AG04449 (cell line): ENCODE measurements at regions of chr6 and their contacts with region 1.

Region 1: GRCh38 chr6:33248925-33249731 is 22.5 kb downstream of the VPS52 start:
- DNase-seq: peak; percentile 95
- H3K4me3 ChIP-seq: peak overlapping the region; percentile 81
- CTCF ChIP-seq: peak; percentile 29

Region 2: DNA sequence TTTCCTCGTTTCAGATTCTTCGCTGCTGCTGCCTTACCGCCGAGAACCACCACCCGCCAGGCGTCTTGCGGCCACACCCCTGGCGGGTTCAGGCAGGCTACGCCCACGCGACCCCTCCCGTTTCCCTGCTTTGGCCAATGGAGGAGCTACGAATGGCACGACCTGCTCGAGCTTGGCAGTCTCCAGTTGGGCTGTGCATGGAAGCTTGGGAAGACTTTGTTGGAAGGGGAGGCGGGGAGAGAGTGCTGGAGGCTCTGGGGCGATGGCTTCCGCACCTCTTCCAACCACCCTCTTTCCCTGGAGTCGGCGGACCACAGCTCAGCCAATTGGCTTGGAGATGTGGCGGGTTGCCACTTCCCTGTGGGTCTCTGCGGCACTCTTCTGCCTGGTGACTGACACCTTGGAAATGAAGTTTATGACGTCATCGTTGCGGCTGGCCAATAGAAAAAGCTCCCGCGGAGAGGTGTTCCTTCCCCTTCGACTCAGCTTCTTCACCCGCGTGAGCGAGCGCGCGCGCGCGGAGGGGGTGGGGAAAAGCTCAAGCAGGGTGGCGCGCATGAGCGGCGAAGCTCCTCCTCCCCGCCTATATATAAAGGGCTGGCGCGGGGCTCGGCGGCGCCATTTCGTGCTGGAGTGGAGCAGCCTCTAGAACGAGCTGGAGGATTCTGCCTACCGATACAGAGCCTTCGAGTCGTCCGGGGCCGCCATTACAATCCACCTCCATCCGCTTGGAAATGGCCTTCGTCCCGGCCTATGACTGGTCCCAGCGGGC is 277.4 kb before region 1 on chr6:
- CTCF ChIA-PET with region 1: interaction called, 6 read pairs
- POLR2A ChIA-PET with region 1: interaction called, 70 read pairs
- DNase-seq: peak; percentile 99
- H3K4me3 ChIP-seq: peak overlapping the region; percentile 92
- CTCF ChIP-seq: no peak

Region 3: DNA sequence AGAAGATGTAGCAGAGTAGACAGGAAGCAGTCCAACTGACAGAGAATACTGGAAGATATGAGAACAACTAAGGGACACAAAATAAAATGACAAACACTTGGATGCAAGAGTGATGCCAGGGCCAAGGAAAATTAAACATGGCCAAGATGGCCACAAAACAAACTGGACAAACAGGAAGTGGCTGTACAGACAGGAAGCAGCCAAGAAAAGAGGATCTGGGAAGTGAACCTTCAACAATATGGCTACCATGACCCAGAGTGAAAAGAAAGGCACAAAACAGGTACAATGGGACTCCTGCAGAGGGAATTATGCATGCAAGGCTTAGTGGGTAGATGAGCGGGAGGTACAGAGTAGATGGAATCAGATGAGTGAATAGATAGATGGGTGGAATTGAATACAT is 144.2 kb before region 1 on chr6:
- CTCF ChIA-PET with region 1: no interaction called
- POLR2A ChIA-PET with region 1: no interaction called
- DNase-seq: no peak
- H3K4me3 ChIP-seq: no peak overlapping the region
- CTCF ChIP-seq: no peak

Region 4: DNA sequence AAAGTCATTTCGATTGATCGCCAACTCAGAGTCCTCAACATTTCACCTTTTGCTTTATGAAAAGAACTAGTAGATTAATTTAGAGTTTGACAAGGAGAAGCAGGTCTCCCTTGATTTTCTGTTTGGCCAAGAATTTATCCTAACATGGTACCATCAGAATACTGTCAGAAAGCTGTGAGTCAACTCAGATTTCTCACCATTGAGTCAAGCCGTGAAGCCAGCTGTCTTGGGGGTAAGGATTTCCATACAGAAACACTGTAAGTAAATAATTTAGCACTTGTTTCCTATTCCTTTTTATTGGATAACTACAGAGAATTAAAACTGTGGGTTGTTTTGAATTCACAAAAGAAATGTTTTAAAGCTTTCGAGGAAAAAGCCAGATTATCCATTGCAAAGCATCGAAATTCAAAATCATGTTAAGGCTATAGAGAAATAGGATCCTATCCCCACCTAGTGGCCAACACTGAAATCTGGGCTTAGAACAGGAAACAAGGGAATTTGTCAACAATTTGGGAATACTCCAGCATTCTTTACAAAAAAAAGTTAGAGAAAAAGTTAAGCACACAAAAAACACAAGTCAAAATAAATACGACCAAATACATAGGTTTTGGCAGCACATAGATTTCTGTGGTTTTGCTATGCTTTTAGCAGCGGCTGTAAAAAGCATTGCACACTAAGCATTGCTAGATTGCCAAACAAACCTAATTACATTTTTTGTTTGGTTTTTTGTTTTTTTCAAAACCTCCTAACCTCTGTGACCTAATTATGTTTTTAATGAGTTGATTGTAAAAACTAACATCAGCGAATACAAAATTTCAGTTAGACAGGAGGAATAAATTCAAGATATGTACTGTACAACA is 101.1 kb before region 1 on chr6:
- CTCF ChIA-PET with region 1: interaction called, 13 read pairs
- POLR2A ChIA-PET with region 1: no interaction called
- DNase-seq: no peak
- H3K4me3 ChIP-seq: no peak overlapping the region
- CTCF ChIP-seq: peak; percentile 69

Region 5: DNA sequence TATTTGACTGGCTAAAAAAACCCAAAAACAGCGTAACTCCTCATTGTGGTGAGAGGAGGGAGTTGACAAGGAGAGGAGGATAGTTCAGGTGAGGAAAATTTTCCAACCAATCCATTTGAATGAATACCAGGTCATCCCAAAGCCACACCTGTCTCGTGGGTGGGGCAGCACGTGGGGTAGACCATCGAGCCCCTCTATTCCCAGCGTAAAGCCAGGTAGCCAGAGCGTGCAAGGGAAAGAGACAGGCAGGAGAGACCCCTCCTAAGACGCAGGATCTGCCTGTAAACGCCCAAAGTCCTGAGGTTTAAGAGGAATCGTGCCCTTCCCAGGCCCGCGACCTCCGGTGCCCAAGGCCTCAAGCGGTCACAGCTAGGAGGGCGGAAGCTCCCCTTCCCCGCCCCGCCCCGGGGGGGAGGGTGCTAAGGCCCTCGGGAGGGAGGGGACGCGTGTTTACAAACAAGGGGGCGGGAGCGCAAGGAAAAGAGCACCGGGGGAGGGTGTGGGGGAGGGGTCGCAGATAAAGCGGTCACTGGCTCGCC is 49.4 kb before region 1 on chr6:
- CTCF ChIA-PET with region 1: interaction called, 13 read pairs
- POLR2A ChIA-PET with region 1: interaction called, 4 read pairs
- DNase-seq: no peak
- H3K4me3 ChIP-seq: peak overlapping the region; percentile 72
- CTCF ChIP-seq: no peak

Region 6: DNA sequence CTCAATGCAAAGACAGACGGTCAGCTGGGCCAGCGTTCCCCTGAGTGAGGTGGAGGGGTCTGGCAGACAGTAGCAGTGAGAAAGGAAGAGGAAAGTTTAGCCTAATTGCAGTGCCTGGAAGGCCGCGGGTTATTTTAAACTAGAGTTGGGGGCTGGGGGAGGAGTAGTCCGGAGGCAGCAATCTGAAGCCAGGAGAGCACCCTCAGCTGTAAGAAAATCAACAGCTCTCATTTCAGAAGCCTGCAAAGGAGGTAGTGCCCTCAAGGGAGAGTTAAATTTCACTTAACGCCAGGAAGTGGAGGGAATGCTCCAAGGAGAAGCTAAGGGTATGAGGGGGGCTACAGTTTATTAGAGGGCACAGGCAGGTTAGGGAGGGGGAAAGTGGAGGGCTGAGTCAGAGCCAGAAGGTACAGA is 13.9 kb before region 1 on chr6:
- CTCF ChIA-PET with region 1: interaction called, 17 read pairs
- POLR2A ChIA-PET with region 1: no interaction called
- DNase-seq: no peak
- H3K4me3 ChIP-seq: no peak overlapping the region
- CTCF ChIP-seq: no peak

Region 7: DNA sequence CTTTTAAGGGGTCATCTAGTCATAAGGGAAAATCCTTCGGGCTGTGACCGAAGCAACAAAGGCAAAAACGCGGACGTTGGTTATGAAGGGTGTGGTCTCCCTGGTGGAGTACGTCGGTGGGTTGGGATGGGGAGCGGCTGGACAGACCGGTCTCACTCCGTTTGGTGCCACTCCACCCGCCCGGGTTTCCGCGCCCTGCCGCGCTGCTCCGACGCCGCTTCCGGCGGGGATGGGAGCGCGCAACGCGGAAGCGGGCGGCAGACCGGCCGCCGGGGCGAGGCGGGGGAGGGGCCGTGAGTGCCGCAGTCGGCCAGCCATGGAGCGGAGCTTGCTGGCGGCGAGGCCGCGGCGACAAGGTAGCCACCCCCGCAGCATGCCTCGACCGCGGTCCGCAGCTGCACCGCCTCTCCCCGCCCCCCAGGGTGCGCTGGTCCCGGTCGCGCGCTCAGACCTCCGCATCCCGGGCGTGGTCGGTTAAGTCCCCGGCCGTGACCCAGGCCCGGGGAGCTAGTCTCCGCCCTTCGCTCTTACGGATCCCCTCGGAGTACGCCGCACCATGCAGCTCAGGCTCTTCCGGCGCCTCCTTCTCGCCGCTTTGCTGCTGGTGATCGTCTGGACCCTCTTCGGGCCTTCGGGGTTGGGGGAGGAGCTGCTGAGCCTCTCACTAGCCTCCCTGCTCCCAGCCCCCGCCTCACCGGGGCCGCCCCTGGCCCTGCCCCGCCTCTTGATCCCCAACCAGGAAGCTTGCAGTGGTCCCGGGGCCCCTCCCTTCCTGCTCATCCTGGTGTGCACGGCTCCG is 27.9 kb after region 1 on chr6 and contains the start of gene B3GALT4:
- CTCF ChIA-PET with region 1: interaction called, 29 read pairs
- POLR2A ChIA-PET with region 1: interaction called, 37 read pairs
- DNase-seq: no peak
- H3K4me3 ChIP-seq: peak within 1 kb of the TSS; percentile 49
- CTCF ChIP-seq: peak; percentile 65

Region 8: DNA sequence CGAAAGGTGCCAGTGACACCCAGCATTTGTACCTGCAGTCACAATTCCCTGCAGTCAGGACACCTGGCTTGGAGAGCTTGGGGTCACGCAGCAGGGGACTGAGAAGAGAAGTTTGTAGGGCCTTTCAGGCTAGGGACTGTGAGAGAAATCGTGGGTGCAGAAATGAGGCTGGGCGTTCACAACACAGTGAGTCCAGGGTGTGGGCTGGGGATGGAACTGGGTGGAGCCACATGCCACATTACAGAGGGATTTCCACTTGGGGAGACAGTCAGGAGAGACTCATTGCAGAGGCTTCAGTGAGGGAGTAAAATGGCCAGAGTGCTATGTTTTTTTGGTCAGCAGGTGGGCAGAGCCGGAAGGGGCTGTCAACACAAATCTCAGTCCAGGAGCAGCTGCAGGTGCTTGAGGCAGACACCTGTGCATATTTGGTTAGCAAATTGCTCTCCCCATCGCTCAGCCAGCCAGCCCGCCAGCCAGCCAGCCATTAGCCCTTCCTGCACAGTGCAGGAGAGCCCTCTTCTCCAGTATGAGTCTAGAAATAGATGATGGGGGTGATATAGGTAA is 379.4 kb after region 1 on chr6:
- CTCF ChIA-PET with region 1: no interaction called
- POLR2A ChIA-PET with region 1: no interaction called
- DNase-seq: no peak
- H3K4me3 ChIP-seq: no peak overlapping the region
- CTCF ChIP-seq: no peak